IMR-90 (cell line): ENCODE measurements at regions of chrX and their contacts with region 1.

Region 1: DNA sequence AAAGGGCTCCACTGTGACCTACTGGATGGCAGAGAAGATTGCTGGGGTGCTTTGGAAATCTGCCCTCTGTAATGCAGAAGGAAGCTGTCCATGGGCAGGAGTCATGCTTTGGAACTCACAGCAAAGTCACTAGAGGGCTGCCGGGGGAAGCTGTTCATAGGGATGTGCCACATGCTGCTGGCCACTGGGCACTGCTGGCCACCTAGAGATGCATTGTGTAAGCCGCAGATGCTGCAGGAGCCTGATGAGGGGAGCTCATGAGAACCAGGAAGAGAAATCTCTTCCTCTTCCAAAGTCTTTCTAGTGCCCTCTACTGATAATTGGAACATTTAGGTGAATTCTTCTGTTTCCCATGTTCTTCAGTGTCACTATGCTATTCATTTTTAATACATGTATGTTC is 31.2 kb upstream of the UXT start:
- DNase-seq: no peak
- ATAC-seq: no peak
- H3K4me3 ChIP-seq: no peak overlapping the region
- H3K27ac ChIP-seq: no peak overlapping the region
- H3K4me1 ChIP-seq: no peaks in the 10 kb centered on the region
- H3K27me3 ChIP-seq: peaks cover 8% of the 10 kb centered on the region; the same call in 1 of the 2 replicates
- CTCF ChIP-seq: no peak
- POLR2A ChIP-seq: no peak
- RAD21 ChIP-seq: no peak

Region 2: GRCh38 chrX:48597353-48598264 is 907.4 kb after region 1 on chrX and contains the start of gene WDR13:
- CTCF ChIA-PET with region 1: interaction called, 10 read pairs
- POLR2A ChIA-PET with region 1: no interaction called
- dilution Hi-C with region 1: no loop called
- in situ Hi-C with region 1: no loop called
- intact Hi-C with region 1: no loop called
- DNase-seq: peak; percentile 93
- ATAC-seq: peak; percentile 93
- H3K4me3 ChIP-seq: peak within 1 kb of the TSS; percentile 62
- H3K27ac ChIP-seq: peak within 1 kb of the TSS; percentile 99
- H3K4me1 ChIP-seq: 0 out of 2 replicates have a peak, but pooled peaks cover 1% of the 10 kb centered on the region
- H3K27me3 ChIP-seq: no peaks in the 10 kb centered on the region
- CTCF ChIP-seq: no peak
- POLR2A ChIP-seq: peak; percentile 65; the same call in 1 of the 2 replicates
- RAD21 ChIP-seq: no peak
- total RNA-seq, gene WDR13: 60.8 and 62.7 TPM in 2 replicates